RWPE1 (cell line): ENCODE measurements at regions of chr1 and their contacts with region 1.

Region 1: GRCh38 chr1:60848583-60849188 is 233.7 kb upstream of the NFIA start:
- DNase-seq: peak; percentile 17
- H3K27ac ChIP-seq: no peak overlapping the region
- CTCF ChIP-seq: peak; percentile 59

Region 2: GRCh38 chr1:59845091-59845490 is 1003.6 kb before region 1 on chr1:
- CTCF ChIA-PET with region 1: no interaction called
- POLR2A ChIA-PET with region 1: no interaction called
- DNase-seq: no peak
- H3K27ac ChIP-seq: no peak overlapping the region
- CTCF ChIP-seq: no peak

Region 3: GRCh38 chr1:60833173-60833572 is 15.5 kb before region 1 on chr1:
- CTCF ChIA-PET with region 1: interaction called, 10 read pairs
- POLR2A ChIA-PET with region 1: no interaction called
- DNase-seq: no peak
- H3K27ac ChIP-seq: no peak overlapping the region
- CTCF ChIP-seq: no peak

Region 4: DNA sequence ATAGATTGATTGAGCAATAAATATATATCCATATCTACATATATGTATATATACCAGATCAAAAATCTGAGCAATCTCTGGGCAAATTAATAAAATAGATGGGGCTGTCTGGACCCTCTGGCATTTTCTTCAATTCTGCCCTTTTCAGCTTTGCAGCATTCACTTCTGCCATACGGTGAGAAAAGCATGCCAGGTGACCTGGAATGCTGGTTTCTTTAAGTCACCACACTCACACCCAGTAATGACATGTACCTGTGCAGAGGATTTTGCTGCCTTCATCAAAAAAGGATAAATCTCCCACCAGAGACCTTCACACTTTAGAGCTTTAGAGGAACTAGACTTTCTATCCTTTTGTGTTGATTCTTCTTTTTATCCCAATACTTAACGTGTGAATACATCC is 10.4 kb after region 1 on chr1:
- CTCF ChIA-PET with region 1: interaction called, 11 read pairs
- POLR2A ChIA-PET with region 1: no interaction called
- DNase-seq: no peak
- H3K27ac ChIP-seq: no peak overlapping the region
- CTCF ChIP-seq: no peak

Region 5: DNA sequence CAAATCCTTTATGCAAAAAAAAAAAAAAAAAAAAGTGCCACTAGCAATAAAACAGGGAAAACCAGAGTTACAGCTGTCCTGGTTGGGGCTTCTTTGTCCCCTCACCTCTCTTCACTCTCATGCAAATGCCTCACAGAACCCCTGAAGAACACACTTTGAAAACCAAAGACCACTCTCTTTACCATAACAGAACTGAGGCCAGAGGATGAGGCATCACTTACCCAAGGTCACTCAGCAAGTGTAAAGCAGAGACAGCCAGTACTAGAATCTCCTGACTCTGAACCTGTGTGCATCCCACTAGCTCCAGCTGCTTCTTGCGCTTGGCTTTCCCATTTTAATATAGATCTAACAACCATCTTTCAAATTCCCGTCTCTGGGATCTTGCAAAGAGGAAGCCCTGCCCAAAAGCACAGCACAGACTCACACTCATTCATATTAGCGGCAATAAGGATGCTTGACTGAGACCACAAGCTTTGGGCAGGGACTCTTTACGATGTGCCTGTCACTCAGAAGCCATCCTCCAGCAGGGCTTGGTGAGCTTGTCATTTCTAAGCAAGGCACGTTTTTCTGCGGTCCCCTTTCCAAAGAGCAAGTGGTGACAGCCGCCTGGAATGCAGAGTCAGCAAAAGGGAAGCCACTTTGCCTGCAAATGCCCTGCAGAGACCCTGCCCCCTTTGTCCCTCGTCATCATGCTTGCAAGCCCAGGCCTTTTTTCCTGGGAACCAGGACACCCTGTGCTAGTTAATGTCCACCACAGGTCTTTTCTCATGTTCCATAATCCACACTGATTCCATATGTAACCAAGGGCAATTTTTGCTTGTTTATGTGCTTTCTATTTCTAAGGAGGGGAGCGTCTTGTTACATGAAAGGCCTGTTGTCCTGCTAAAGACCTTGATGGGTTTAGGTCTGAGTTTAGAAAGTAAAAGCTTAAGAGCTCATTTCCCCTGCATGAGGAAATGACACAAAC is 157.2 kb after region 1 on chr1:
- CTCF ChIA-PET with region 1: no interaction called
- POLR2A ChIA-PET with region 1: no interaction called
- DNase-seq: no peak
- H3K27ac ChIP-seq: no peak overlapping the region
- CTCF ChIP-seq: no peak